B cell (primary cell): ENCODE measurements at regions of chr6 and their contacts with region 1.

Region 1: DNA sequence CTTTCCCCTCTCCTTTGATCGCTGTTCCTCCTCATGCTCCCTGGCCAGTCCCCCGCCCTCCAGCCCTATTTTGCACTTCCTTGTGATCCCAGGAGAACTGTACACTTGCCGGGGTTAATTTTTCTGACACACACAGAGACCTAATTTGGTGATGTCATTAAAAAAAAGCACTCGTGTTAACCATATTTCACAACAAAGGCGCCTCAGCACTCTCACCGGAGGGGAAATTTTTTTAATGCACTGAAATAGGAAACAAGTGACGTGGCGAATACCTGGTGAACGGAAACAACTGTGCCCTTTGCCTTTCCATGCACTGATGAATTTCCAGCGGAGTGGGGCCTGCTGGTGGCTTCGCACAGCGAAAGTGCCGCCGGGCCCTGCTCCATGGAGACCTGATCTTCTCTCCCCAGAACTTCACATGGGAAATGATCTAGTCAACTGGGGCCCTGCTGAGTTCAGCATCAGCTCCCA is 53.9 kb upstream of the TAGAP start:
- DNase-seq: peak; percentile 93
- ATAC-seq: peak; percentile 44
- H3K4me3 ChIP-seq: peak overlapping the region in 3 of 5 experiments; percentile 5 to 38 (median 13)
- H3K4me3 Mint-ChIP-seq: peak overlapping the region; percentile 77
- H3K27ac ChIP-seq: peak overlapping the region; percentile 95 to 98
- H3K27ac Mint-ChIP-seq: peak overlapping the region; percentile 93
- H3K4me1 ChIP-seq: peaks cover 77 to 88% of the 10 kb centered on the region in 2 donors
- H3K4me1 Mint-ChIP-seq: peaks cover 92% of the 10 kb centered on the region
- H3K27me3 ChIP-seq: no peaks in the 10 kb centered on the region
- H3K27me3 Mint-ChIP-seq: no peaks in the 10 kb centered on the region
- CTCF ChIP-seq: no peak

Region 2: GRCh38 chr6:159084493-159085091 is 14.1 kb before region 1 on chr6:
- CTCF ChIA-PET with region 1: interaction called, 14 read pairs
- POLR2A ChIA-PET with region 1: interaction called, 15 read pairs
- intact Hi-C with region 1: loop called (anchors 1 kb)
- DNase-seq: no peak
- ATAC-seq: no peak
- H3K4me3 ChIP-seq: no peak overlapping the region
- H3K4me3 Mint-ChIP-seq: no peak overlapping the region
- H3K27ac ChIP-seq: no peak overlapping the region
- H3K27ac Mint-ChIP-seq: no peak overlapping the region
- H3K4me1 ChIP-seq: peaks cover 32 to 33% of the 10 kb centered on the region in 2 donors
- H3K4me1 Mint-ChIP-seq: peaks cover 27% of the 10 kb centered on the region
- H3K27me3 ChIP-seq: no peaks in the 10 kb centered on the region
- H3K27me3 Mint-ChIP-seq: no peaks in the 10 kb centered on the region
- CTCF ChIP-seq: no peak

Region 3: DNA sequence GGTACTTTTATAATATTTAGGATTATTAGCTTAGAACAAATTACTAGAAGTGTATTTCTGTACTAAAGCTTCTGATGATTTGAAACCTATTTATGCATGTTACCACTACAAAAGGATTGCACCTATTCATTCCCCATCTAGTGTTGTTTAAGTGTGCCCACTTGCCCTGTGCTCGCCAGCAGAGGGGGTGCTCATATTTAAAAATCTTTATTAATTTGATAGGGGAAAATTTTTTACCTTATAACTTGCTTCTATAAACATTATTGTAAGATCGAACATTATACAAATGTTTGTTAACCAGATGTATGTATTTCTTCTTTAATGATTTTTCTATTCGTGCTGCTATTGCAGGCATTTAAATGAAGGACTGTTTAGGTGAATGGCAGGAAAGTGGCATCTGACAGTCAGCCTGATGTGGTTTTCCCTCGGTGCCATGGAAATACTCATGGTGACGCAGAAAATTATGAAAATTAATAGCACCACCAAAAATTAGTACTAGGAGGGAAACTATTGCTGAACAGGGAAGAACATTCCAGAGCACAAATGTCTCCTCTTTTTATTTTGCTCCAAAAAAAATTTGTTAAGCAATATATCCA is 26.4 kb after region 1 on chr6:
- CTCF ChIA-PET with region 1: interaction called, 1,002 read pairs
- POLR2A ChIA-PET with region 1: interaction called, 9 read pairs
- intact Hi-C with region 1: loop called (anchors 5 kb)
- DNase-seq: no peak
- ATAC-seq: no peak
- H3K4me3 ChIP-seq: no peak overlapping the region
- H3K4me3 Mint-ChIP-seq: no peak overlapping the region
- H3K27ac ChIP-seq: no peak overlapping the region
- H3K27ac Mint-ChIP-seq: no peak overlapping the region
- H3K4me1 ChIP-seq: peaks cover 40 to 46% of the 10 kb centered on the region in 2 donors
- H3K4me1 Mint-ChIP-seq: peaks cover 61% of the 10 kb centered on the region
- H3K27me3 ChIP-seq: no peaks in the 10 kb centered on the region
- H3K27me3 Mint-ChIP-seq: no peaks in the 10 kb centered on the region
- CTCF ChIP-seq: peak; percentile 62